ENCODE measurements at regions of chr2 and their contacts with region 1.

Region 1: DNA sequence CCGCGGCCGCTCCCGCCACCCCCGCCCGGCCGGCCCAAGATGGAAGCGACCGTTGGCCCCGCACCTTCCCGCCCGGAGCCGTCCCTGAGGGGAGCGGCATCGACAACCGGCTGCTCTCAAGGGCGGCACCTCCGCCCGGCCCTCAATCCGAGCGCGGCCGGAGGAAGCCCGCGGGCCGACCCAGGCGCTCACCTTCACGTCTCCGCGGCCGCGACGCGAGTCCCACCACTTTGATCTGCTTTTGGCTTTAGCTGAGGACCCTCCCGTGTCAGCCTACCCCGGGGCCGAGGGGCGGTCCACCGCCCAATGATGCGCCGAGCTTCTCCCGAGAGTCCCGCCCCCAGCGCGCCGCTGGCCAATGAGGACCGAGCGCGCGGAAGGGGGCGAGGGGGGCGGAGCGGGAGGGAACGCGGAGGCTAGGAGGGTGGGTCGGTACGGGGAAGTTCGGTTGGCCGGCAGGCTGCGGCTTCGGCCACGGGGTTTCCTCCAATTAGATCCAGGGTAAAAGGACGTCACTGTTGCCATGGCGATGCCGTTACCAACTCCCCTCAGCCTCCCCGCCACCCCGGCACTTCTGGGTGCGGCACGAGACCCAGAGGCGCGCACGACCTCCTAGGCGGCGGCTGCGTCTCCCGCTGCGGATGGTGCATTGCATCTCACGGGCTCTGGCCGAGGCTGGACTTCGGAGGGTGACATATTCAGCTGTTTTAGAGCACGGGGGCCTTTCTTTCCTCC is at the start of gene YWHAQ:
- DNase-seq: peak; percentile 99
- ATAC-seq: peak; percentile 88 to 94
- H3K4me3 ChIP-seq: peak within 1 kb of the TSS; percentile 93
- H3K27ac ChIP-seq: peak within 1 kb of the TSS; percentile 96 to 97
- H3K4me1 ChIP-seq: peaks cover 40% of the 10 kb centered on the region
- CTCF ChIP-seq: no peak
- EP300 ChIP-seq: no peak
- POLR2A ChIP-seq: peak; percentile 98
- RAD21 ChIP-seq: peak; percentile 22 to 40; a peak in 3 of 5 replicates
- polyA plus RNA-seq, gene YWHAQ: 672 and 833 TPM in 2 replicates

Region 2: DNA sequence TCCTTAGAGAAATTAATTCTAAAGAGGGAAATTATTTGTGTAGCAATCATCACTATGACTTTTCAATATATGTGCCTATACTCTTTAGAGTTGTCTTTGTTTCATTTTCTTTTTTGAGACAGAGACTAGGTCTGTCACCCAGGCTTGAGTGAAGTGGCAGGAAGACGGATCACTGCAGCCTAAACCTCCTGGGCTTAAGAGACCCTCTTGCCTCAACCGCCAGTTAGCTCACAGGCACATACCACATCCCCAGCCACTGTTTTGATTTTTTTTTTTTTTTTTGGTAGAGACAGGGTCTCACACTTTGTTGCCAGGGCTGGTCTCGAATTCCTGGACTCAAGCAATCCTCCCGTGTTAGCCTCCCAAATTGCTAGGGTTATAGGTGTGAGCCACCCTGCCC is 12.5 kb before region 1 on chr2:
- CTCF ChIA-PET with region 1: interaction called, 4 read pairs
- POLR2A ChIA-PET with region 1: interaction called, 22 read pairs
- DNase-seq: no peak
- ATAC-seq: no peak
- H3K4me3 ChIP-seq: no peak overlapping the region
- H3K27ac ChIP-seq: no peak overlapping the region
- H3K4me1 ChIP-seq: peaks cover 70% of the 10 kb centered on the region
- CTCF ChIP-seq: no peak
- EP300 ChIP-seq: no peak
- POLR2A ChIP-seq: no peak
- RAD21 ChIP-seq: no peak

Region 3: DNA sequence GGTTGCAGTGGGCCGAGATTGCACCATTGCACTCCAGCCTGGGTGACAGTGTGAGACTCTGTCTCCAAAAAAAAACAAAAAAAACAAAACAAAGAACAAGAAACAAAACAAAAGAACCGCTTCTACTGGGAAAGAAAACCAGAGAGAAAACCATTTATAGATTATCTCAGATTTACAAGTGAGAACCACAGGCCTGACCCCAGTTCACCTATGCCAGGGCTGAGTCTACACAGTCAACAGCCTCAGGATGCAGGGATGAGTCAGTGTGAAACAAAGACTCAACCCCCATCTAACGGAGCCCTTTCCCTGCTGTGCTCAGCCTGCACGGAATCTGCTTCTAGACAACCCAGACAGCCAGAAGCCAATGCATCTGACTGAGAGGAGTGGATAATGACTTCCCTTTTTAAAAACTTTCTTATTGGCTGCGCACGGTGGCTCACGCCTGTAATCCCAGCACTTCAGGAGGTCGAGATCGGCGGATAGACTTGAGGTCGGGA is 25.4 kb after region 1 on chr2:
- CTCF ChIA-PET with region 1: interaction called, 7 read pairs
- POLR2A ChIA-PET with region 1: interaction called, 62 read pairs
- DNase-seq: peak; percentile 90 to 95
- ATAC-seq: peak; percentile 91 to 94
- H3K4me3 ChIP-seq: no peak overlapping the region
- H3K27ac ChIP-seq: peak overlapping the region; percentile 84 to 86
- H3K4me1 ChIP-seq: peaks cover 50% of the 10 kb centered on the region
- CTCF ChIP-seq: no peak
- EP300 ChIP-seq: peak in 1 of 2 experiments; percentile 60; a peak in 1 of 5 replicates
- POLR2A ChIP-seq: no peak
- RAD21 ChIP-seq: peak; percentile 41 to 43

Region 4: DNA sequence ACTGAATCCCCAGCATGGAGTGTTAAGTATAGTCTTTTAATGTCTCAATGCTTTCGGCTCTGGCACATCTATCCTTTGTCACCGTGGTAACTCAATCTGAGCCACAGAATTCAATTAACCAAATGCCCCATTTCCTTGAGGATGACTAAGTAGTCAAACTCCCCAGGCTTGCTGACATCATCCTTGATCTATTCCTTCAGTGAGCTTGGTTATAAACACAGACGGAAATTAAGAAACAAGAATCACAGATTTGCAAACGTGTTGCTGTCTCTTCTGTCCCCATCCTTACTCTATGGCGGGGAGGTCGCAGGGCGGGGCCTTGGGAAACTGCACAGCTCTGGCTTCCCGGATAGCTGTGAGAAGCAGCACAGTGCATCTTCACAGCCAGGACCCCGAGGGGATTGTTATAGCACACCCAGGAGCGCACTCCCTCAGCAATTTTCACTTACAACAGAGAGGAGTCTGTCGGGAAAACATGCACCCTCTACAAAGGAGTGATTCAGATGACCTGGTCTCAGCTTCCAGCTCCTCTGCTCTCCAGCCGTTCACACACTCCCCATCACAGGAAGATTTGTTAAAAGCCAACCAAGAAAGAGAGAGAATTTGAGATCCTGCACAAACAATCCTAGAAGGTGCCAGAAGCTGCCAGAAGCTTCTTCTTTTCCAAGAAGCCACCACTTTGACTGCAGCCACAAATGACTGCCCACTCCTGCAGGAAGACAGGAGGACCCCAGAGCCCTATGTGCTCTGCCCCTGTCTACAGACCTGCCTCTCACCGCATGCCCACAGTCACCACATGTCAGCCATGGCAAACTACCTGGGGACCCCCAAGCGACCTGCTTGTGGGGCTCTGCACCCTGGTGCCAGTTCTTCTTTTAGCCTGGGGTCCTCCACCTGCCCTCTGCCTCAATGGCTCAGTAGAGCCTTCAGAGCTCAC is 44.8 kb after region 1 on chr2:
- CTCF ChIA-PET with region 1: interaction called, 3 read pairs
- POLR2A ChIA-PET with region 1: interaction called, 17 read pairs
- DNase-seq: peak; percentile 65 to 83
- ATAC-seq: peak; percentile 88 to 89
- H3K4me3 ChIP-seq: peak overlapping the region; percentile 19; the same call in 2 of the 3 replicates
- H3K27ac ChIP-seq: peak overlapping the region; percentile 79 to 85
- H3K4me1 ChIP-seq: peaks cover 30% of the 10 kb centered on the region
- CTCF ChIP-seq: no peak
- EP300 ChIP-seq: no peak
- POLR2A ChIP-seq: no peak
- RAD21 ChIP-seq: 0 out of 5 replicates have a peak, but pooled peaks of 1 of the 2 experiments have one; percentile 22

Region 5: DNA sequence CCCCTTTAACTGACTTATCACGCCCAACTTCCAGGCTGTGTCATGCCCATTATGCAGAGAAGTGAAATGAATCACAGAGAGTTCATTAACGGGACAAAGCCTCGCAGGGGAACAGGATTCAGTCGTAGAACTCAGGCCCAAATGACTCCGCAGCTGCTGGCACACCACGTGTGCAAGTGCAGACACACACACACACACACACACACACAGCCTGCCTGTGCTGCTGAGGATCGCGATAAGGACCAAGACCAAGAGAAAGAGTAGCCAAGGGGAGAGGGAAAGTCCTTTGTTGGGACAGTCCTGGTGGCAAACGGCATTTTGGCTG is 122.3 kb after region 1 on chr2:
- CTCF ChIA-PET with region 1: interaction called, 3 read pairs
- POLR2A ChIA-PET with region 1: interaction called, 25 read pairs
- DNase-seq: peak; percentile 88 to 92
- ATAC-seq: peak; percentile 81 to 91
- H3K4me3 ChIP-seq: peak overlapping the region; percentile 35
- H3K27ac ChIP-seq: peak overlapping the region; percentile 87 to 93
- H3K4me1 ChIP-seq: peaks cover 48% of the 10 kb centered on the region
- CTCF ChIP-seq: no peak
- EP300 ChIP-seq: no peak
- POLR2A ChIP-seq: peak; percentile 30; the same call in 1 of the 2 replicates
- RAD21 ChIP-seq: no peak; a peak in 1 of 5 replicates

Region 6: GRCh38 chr2:9885036-9885684 is 254.2 kb after region 1 on chr2:
- CTCF ChIA-PET with region 1: no interaction called
- POLR2A ChIA-PET with region 1: no interaction called
- DNase-seq: no peak
- ATAC-seq: 0 out of 6 replicates have a peak, but pooled peaks of 1 of the 2 experiments have one; percentile 24
- H3K4me3 ChIP-seq: no peak overlapping the region
- H3K27ac ChIP-seq: no peak overlapping the region
- H3K4me1 ChIP-seq: no peaks in the 10 kb centered on the region
- CTCF ChIP-seq: no peak
- EP300 ChIP-seq: no peak
- POLR2A ChIP-seq: no peak
- RAD21 ChIP-seq: no peak